ENCODE measurements at regions of chr10 and their contacts with region 1.

Region 1: GRCh38 chr10:121722665-121723064 is 124.4 kb upstream of the FGFR2 start:
- H3K4me3 ChIP-seq: no peak overlapping the region
- H3K27ac ChIP-seq: no peak overlapping the region
- H3K4me1 ChIP-seq: no peaks in the 10 kb centered on the region
- CTCF ChIP-seq: no peak

Region 2: GRCh38 chr10:121732656-121733445 is 10.2 kb after region 1 on chr10:
- CTCF ChIA-PET with region 1: interaction called, 10 read pairs
- POLR2A ChIA-PET with region 1: no interaction called
- H3K4me3 ChIP-seq: no peak overlapping the region
- H3K27ac ChIP-seq: no peak overlapping the region
- H3K4me1 ChIP-seq: no peaks in the 10 kb centered on the region
- CTCF ChIP-seq: no peak

Region 3: GRCh38 chr10:121753726-121754476 is 31.2 kb after region 1 on chr10:
- CTCF ChIA-PET with region 1: no interaction called
- POLR2A ChIA-PET with region 1: no interaction called
- H3K4me3 ChIP-seq: no peak overlapping the region
- H3K27ac ChIP-seq: no peak overlapping the region
- H3K4me1 ChIP-seq: no peaks in the 10 kb centered on the region
- CTCF ChIP-seq: no peak